Cardiac septum (tissue), 1 donor: ENCODE measurements at regions of chr20 and their contacts with region 1.

Region 1: GRCh38 chr20:9068851-9069663 is at the start of gene PLCB4:
- DNase-seq: peak; percentile 78
- total RNA-seq, gene PLCB4: 20.5 TPM

Region 2: GRCh38 chr20:9166153-9166780 is 97.2 kb after region 1 on chr20:
- intact Hi-C with region 1: loop called (anchors 5 kb)
- DNase-seq: no peak

Region 3: DNA sequence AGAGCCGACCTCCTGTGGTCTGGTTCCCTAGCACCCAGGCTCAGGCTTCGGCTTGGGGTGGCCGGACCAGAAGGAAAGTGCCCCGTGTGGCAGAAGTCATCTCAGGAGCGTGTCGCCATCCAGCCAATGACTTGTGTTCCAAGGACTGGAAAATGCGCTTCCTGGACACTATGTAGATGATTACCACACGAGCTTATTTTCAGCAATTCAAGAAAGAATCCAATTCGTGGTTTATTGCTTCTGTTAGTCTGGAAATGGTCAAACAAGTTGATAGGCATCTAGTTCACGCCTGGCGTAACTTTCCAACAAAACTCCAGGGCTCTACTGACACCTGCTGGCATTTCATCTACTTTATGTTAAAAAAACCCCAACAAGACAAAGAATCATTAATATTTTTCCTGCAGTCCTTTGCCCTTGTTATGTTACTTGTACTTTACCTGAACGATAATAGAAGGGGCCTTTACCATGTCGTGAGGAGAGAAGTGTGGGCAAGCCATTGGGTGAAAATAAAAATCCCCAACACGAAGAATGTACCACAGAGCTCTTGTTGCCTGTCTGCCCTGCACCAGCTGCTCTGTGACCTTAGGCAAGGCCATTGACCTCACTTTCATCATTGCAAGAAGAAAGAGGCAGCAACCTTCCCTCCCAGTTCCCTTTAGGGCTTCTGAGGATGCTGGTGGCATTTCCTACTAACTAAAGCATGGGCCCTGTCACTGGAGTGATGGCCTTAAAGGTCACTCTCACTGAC is 290.7 kb after region 1 on chr20:
- intact Hi-C with region 1: loop called (anchors 10 kb)
- DNase-seq: no peak